Psoas muscle (tissue), 8 donors: ENCODE measurements at regions of chr4 and their contacts with region 1.

Region 1: GRCh38 chr4:166091912-166092510 is 219.0 kb downstream of the TLL1 start:
- DNase-seq: no peak
- ATAC-seq: peak in 1 of 4 donors; percentile 56
- H3K4me3 ChIP-seq: no peak overlapping the region
- H3K27ac ChIP-seq: no peak overlapping the region
- H3K4me1 ChIP-seq: no peaks in the 10 kb centered on the region
- H3K27me3 ChIP-seq: no peaks in the 10 kb centered on the region
- CTCF ChIP-seq: peak; percentile 69

Region 2: GRCh38 chr4:165493359-165493758 is 598.7 kb before region 1 on chr4:
- intact Hi-C with region 1: loop called in 1 of 2 experiments (anchors 5 kb)
- DNase-seq: peak; percentile 65 to 78
- ATAC-seq: peak; percentile 54 to 89 (median 78)
- H3K4me3 ChIP-seq: no peak overlapping the region
- H3K27ac ChIP-seq: no peak overlapping the region
- H3K4me1 ChIP-seq: no peaks in the 10 kb centered on the region
- H3K27me3 ChIP-seq: no peaks in the 10 kb centered on the region
- CTCF ChIP-seq: peak; percentile 60

Region 3: GRCh38 chr4:165537028-165537648 is 554.9 kb before region 1 on chr4:
- intact Hi-C with region 1: loop called (anchors 2 to 5 kb)
- DNase-seq: no peak
- ATAC-seq: peak in 2 of 4 donors; percentile 45 to 60
- H3K4me3 ChIP-seq: no peak overlapping the region
- H3K27ac ChIP-seq: no peak overlapping the region
- H3K4me1 ChIP-seq: no peaks in the 10 kb centered on the region
- H3K27me3 ChIP-seq: peaks cover 0 to 2% (median 0%) of the 10 kb centered on the region in 3 donors
- CTCF ChIP-seq: peak; percentile 80

Region 4: GRCh38 chr4:165873298-165874071 is 218.5 kb before region 1 on chr4:
- intact Hi-C with region 1: loop called in 1 of 2 experiments (anchors 10 kb)
- DNase-seq: peak; percentile 33 to 58
- ATAC-seq: peak; percentile 13 to 77 (median 48)
- H3K4me3 ChIP-seq: peak overlapping the region; percentile 65
- H3K27ac ChIP-seq: no peak overlapping the region
- H3K4me1 ChIP-seq: no peaks in the 10 kb centered on the region
- H3K27me3 ChIP-seq: peaks cover 0 to 54% (median 0%) of the 10 kb centered on the region in 3 donors
- CTCF ChIP-seq: no peak